ENCODE measurements at regions of chr10 and their contacts with region 1.

Region 1: GRCh38 chr10:10973310-10973709 is 44.4 kb upstream of the CELF2 start:
- DNase-seq: no peak
- H3K4me3 ChIP-seq: no peak overlapping the region
- H3K27ac ChIP-seq: no peak overlapping the region
- H3K4me1 ChIP-seq: no peaks in the 10 kb centered on the region
- H3K27me3 ChIP-seq: no peaks in the 10 kb centered on the region
- CTCF ChIP-seq: no peak
- POLR2A ChIP-seq: no peak

Region 2: DNA sequence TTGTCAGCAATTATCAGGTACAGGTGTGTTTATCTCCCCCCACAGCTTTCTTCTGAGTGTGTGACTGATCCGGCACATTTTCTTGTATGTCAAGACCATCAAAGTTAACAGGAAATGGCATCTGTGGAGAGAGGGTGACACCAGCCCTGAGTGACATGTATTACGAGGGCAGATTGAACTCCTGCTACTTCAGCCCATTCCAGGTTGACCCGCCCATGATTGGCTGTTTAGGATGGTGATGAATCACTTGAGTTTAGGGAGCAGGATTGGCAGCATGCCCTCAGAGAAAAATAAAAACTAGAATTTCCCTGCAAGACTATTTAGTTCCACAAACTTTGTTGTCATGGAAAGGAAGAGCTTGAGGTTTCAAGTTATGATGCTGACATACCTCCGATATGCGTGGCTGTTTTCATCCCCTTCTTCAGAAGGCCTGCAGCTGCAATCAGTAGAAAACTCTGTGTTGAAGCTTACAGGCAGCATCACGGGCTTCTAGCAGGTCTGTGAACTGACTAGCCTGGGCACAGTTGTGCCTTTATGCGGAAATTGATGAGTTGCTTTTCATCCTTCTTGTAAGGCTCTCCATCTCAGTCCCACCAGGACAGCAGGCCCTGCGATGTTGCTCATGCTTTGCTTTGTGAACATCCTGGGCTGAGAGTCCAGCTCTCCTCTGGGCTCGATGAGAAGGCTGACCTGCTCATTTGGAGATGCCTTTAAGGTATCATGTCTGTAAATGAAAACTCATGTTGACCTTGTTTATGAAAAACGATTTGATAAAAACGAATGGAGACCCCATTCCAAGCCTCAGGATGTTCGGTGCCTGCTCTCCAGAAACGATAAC is 36.4 kb after region 1 on chr10:
- intact Hi-C with region 1: no loop called
- DNase-seq: no peak
- H3K4me3 ChIP-seq: no peak overlapping the region
- H3K27ac ChIP-seq: no peak overlapping the region
- H3K4me1 ChIP-seq: no peaks in the 10 kb centered on the region
- H3K27me3 ChIP-seq: peaks cover 0 to 3% of the 10 kb centered on the region in 2 donors
- CTCF ChIP-seq: no peak
- POLR2A ChIP-seq: no peak

Region 3: GRCh38 chr10:11036407-11037011 is 63.2 kb after region 1 on chr10:
- intact Hi-C with region 1: loop called (anchors 2 kb)
- DNase-seq: no peak
- H3K4me3 ChIP-seq: no peak overlapping the region
- H3K27ac ChIP-seq: no peak overlapping the region
- H3K4me1 ChIP-seq: no peaks in the 10 kb centered on the region
- H3K27me3 ChIP-seq: no peaks in the 10 kb centered on the region
- CTCF ChIP-seq: peak in 2 of 3 donors; percentile 48 to 68
- POLR2A ChIP-seq: no peak

Measured in breast epithelium (tissue), 4 donors.